Activated T-helper 1 cell treated with anti-CD3 and anti-CD28 coated beads, Interleukin-12 subunit alpha, Interleukin-12 subunit beta, Interleukin-2, Interleukin-4 antibody, amounts not matched to agents 30 ng/mL and 10 ng/mL and 1 ng/mL, durations not matched to agents 14 hours and 24 hours and 36 hours (primary cell): ENCODE measurements at regions of chr10 and their contacts with region 1.

Region 1: DNA sequence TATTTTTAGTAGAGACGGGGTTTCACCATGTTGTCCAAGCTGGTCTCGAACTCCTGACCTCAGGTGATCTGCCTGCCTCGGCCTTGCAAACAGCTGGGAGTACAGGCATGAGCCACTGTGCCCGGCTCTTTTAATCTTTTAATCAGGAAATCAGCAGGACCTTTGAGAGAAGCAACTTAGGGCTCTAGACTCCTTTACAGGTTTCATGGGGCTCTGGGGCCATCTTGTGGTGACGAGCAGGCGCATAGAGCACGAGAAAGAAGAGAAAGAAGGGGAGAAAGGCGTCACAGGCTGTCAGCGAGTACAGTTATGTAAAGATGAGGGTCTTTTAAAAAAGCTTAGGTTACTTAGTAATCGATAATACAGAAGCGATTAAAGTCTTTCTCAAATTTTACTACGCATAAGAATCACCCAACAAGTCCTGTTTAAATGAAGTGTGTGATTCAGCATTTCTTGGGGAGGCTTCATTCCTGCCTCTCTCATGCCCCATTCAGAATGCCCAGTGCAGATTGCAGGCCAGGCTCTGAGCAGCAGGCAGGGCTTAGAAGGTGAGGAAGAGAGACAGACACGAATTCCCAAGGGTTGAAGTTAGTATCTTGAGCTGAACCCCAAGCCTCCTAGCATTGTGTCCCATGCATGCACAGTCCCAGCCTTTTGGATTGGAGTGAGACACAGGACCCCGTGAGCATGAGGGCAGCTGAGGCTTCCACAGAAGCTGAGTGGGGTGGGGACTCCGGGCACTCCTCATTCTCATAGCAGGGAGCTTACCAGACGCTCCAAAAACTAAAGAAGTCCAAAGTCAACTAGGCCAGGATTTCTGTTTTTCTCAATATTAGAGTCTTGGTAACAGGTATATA is 23.6 kb upstream of the PFKP start:
- DNase-seq: peak; percentile 13
- H3K4me3 Mint-ChIP-seq: no peak overlapping the region
- H3K27ac Mint-ChIP-seq: no peak overlapping the region
- H3K4me1 Mint-ChIP-seq: no peaks in the 10 kb centered on the region
- H3K27me3 Mint-ChIP-seq: peaks cover 6% of the 10 kb centered on the region

Region 2: GRCh38 chr10:2839081-2839725 is 204.5 kb before region 1 on chr10:
- intact Hi-C with region 1: loop called (anchors 1 kb)
- DNase-seq: no peak
- H3K4me3 Mint-ChIP-seq: no peak overlapping the region
- H3K27ac Mint-ChIP-seq: no peak overlapping the region
- H3K4me1 Mint-ChIP-seq: no peaks in the 10 kb centered on the region
- H3K27me3 Mint-ChIP-seq: peaks cover 15% of the 10 kb centered on the region

Region 3: DNA sequence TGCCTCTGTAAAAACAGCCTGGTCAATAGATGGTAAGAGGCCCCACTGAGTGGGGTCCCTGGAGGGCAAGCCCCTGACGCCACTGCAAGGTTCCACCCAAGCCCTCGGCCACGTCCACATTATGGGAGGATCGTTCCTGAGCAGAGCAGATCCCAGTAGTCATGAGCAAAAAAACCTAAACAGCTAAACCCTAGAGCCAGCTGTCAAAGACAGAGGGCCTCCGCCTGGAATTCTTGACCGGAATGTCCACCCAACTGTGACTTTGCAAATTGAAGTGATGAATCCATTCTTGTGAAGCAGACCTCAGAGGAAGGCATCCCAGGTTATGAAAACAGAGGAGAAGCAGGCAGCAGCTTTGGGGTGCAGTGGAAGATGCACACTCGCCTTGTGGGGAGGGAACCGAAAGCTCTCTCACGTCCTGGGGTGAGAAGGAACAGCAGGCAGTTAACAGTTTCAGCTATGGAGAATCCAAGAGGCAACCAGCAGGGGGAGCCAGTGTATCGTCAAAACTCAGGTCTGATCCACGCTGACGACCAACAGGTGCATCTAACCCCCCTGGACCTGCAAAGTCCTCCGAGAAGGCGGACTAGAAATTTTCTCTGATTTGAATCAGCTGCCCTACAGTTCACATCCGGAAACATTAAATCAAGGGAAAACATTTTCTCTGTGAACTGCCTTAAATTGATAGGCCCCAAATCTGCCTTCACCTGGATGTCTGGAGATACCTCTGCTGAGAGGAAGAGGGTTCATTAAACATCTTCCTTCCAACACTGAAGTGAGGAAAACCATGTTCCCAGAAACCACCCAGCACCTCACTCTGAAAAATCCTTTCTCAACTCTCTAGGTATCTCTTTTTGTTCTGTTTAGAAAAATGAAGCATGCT is 115.5 kb before region 1 on chr10:
- intact Hi-C with region 1: loop called (anchors 1 kb)
- DNase-seq: peak; percentile 46
- H3K4me3 Mint-ChIP-seq: no peak overlapping the region
- H3K27ac Mint-ChIP-seq: peak overlapping the region; percentile 37
- H3K4me1 Mint-ChIP-seq: peaks cover 8% of the 10 kb centered on the region
- H3K27me3 Mint-ChIP-seq: peaks cover 15% of the 10 kb centered on the region

Region 4: DNA sequence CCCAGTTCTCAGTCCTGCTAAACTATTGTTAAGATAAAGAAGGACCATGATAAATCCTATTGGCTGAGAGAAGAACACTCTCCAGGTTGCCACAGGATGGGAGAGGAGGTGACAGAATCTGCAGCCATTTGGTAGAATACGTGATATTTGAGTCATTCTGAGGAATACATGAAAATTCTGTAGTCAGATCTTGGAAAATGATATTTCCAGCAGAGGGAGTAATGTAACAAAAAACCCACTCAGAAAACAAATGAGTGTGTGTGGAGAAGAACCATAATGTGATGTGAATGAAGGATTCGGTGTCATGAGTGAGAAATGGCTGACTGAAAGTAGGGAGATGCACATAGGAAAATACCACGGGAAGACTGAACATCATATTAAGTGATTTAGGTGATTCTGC is 104.9 kb before region 1 on chr10:
- intact Hi-C with region 1: loop called (anchors 1 kb)
- DNase-seq: no peak
- H3K4me3 Mint-ChIP-seq: no peak overlapping the region
- H3K27ac Mint-ChIP-seq: no peak overlapping the region
- H3K4me1 Mint-ChIP-seq: no peaks in the 10 kb centered on the region
- H3K27me3 Mint-ChIP-seq: peaks cover 9% of the 10 kb centered on the region